Naive thymus-derived CD4-positive, alpha-beta T cell (primary cell): ENCODE measurements at regions of chr16 and their contacts with region 1.

Region 1: GRCh38 chr16:59941594-59941993 is 1207.5 kb upstream of the GOT2 start:
- DNase-seq: no peak
- ATAC-seq: no peak
- H3K4me3 ChIP-seq: no peak overlapping the region
- H3K4me3 Mint-ChIP-seq: no peak overlapping the region
- H3K27ac ChIP-seq: no peak overlapping the region
- H3K27ac Mint-ChIP-seq: no peak overlapping the region
- H3K4me1 ChIP-seq: no peaks in the 10 kb centered on the region
- H3K4me1 Mint-ChIP-seq: no peaks in the 10 kb centered on the region
- H3K27me3 ChIP-seq: no peaks in the 10 kb centered on the region
- H3K27me3 Mint-ChIP-seq: no peaks in the 10 kb centered on the region

Region 2: GRCh38 chr16:59886021-59886420 is 55.6 kb before region 1 on chr16:
- CTCF ChIA-PET with region 1: no interaction called
- POLR2A ChIA-PET with region 1: no interaction called
- intact Hi-C with region 1: loop called in 1 of 2 experiments (anchors 1 kb)
- DNase-seq: no peak
- ATAC-seq: no peak
- H3K4me3 ChIP-seq: no peak overlapping the region
- H3K4me3 Mint-ChIP-seq: no peak overlapping the region
- H3K27ac ChIP-seq: no peak overlapping the region
- H3K27ac Mint-ChIP-seq: no peak overlapping the region
- H3K4me1 ChIP-seq: no peaks in the 10 kb centered on the region
- H3K4me1 Mint-ChIP-seq: no peaks in the 10 kb centered on the region
- H3K27me3 ChIP-seq: no peaks in the 10 kb centered on the region
- H3K27me3 Mint-ChIP-seq: no peaks in the 10 kb centered on the region